HEK293 (cell line): ENCODE measurements at regions of chr6 and their contacts with region 1.

Region 1: DNA sequence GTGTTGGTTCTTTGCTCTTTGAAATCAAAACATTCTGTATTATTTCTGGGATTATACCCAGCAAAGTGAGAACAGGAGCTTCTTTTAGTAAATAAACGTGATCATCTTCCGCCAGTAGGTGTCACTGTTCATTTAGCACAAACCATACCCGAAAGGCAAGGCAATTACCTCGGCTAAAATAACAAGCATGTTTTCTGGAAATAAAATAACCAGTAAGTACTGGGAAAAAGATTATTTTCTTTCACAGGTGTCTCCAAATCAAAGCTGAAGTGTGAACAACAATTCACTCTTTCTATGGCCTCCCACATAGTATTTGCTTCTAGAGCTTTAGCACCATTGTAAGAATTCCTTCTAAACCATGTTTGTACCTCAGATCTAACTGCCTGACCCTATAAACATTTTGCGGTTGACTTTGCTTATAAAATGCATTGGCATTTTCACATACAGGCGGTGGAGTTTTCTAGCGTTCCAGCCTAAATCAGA is 144.6 kb upstream of the AGPAT4 start:
- H3K4me3 ChIP-seq: no peak overlapping the region
- H3K27ac ChIP-seq: no peak overlapping the region
- H3K4me1 ChIP-seq: no peaks in the 10 kb centered on the region
- CTCF ChIP-seq: 0 out of 2 replicates have a peak, but pooled peaks have one; percentile 23

Region 2: GRCh38 chr6:161279677-161280415 is 138.7 kb before region 1 on chr6:
- CTCF ChIA-PET with region 1: no interaction called
- POLR2A ChIA-PET with region 1: no interaction called
- H3K4me3 ChIP-seq: no peak overlapping the region
- H3K27ac ChIP-seq: no peak overlapping the region
- H3K4me1 ChIP-seq: no peaks in the 10 kb centered on the region
- CTCF ChIP-seq: no peak

Region 3: GRCh38 chr6:161292145-161292544 is 126.4 kb before region 1 on chr6:
- CTCF ChIA-PET with region 1: no interaction called
- POLR2A ChIA-PET with region 1: no interaction called
- H3K4me3 ChIP-seq: no peak overlapping the region
- H3K27ac ChIP-seq: no peak overlapping the region
- H3K4me1 ChIP-seq: no peaks in the 10 kb centered on the region
- CTCF ChIP-seq: no peak

Region 4: GRCh38 chr6:161327360-161327953 is 91.0 kb before region 1 on chr6:
- CTCF ChIA-PET with region 1: no interaction called
- POLR2A ChIA-PET with region 1: no interaction called
- H3K4me3 ChIP-seq: no peak overlapping the region
- H3K27ac ChIP-seq: no peak overlapping the region
- H3K4me1 ChIP-seq: no peaks in the 10 kb centered on the region
- CTCF ChIP-seq: no peak

Region 5: DNA sequence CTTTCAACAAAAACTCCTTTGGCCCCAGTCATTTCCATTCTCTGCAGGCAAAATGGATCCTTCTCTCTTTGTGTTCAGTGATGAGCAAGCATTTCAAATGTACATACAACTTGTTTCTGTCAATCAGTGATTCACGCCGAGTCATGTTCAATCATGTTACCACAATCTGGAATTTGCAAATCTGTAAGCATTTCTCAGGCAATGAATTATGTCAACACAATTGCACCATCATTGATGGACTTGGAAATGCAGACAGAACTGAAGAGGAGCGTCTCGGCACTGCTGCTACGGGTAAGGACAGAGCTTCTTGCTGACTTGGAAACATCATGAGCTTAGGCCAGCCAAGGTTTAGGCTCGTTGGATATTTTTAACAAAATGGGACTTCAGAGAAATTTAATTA is 11.9 kb before region 1 on chr6:
- CTCF ChIA-PET with region 1: interaction called, 37 read pairs
- POLR2A ChIA-PET with region 1: no interaction called
- H3K4me3 ChIP-seq: no peak overlapping the region
- H3K27ac ChIP-seq: no peak overlapping the region
- H3K4me1 ChIP-seq: no peaks in the 10 kb centered on the region
- CTCF ChIP-seq: no peak

Region 6: GRCh38 chr6:161439093-161439492 is 20.6 kb after region 1 on chr6:
- CTCF ChIA-PET with region 1: interaction called, 31 read pairs
- POLR2A ChIA-PET with region 1: no interaction called
- H3K4me3 ChIP-seq: no peak overlapping the region
- H3K27ac ChIP-seq: no peak overlapping the region
- H3K4me1 ChIP-seq: no peaks in the 10 kb centered on the region
- CTCF ChIP-seq: no peak

Region 7: GRCh38 chr6:161498359-161498758 is 79.9 kb after region 1 on chr6:
- CTCF ChIA-PET with region 1: interaction called, 78 read pairs
- POLR2A ChIA-PET with region 1: no interaction called
- H3K4me3 ChIP-seq: no peak overlapping the region
- H3K27ac ChIP-seq: no peak overlapping the region
- H3K4me1 ChIP-seq: no peaks in the 10 kb centered on the region
- CTCF ChIP-seq: peak; percentile 69

Region 8: GRCh38 chr6:161542346-161542980 is 124.0 kb after region 1 on chr6:
- CTCF ChIA-PET with region 1: interaction called, 10 read pairs
- POLR2A ChIA-PET with region 1: no interaction called
- H3K4me3 ChIP-seq: no peak overlapping the region
- H3K27ac ChIP-seq: no peak overlapping the region
- H3K4me1 ChIP-seq: no peaks in the 10 kb centered on the region
- CTCF ChIP-seq: no peak

Region 9: DNA sequence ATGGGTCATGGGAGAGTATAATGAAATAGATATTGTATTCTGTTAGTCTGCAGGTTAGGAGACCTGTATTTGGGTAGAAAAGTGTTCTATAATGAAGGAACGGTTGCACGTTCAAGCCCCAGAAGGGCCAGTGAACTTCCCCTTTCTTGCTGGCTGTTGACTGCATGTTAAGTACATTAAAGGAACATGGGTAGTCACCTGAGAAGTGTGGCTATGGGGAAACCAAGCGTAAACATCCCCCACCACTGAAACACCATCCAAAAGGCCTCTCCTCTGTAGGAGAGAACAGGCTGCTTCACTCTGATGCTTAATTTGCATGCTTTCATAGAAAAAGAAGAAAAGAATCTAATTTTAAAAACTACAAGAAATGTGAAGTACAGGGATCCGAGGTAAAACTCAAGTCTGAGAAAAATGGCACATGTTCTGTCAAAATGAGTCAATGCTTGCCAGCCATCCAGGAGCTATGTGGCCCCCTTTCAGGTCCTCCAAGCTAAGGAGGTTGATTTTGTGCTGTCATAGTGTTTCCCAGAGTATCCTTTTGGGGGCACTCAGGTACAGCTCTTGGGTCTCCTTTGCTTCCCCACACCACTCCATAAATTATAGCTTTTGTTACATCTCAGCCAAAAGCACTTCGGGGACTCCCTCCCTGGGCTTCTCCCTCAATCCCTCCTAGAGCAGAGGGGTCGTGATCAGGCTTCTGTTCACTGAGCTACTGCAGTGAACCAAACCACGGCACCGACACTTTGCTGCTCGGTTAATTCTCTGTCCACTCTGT is 139.0 kb after region 1 on chr6:
- CTCF ChIA-PET with region 1: interaction called, 10 read pairs
- POLR2A ChIA-PET with region 1: no interaction called
- H3K4me3 ChIP-seq: no peak overlapping the region
- H3K27ac ChIP-seq: no peak overlapping the region
- H3K4me1 ChIP-seq: no peaks in the 10 kb centered on the region
- CTCF ChIP-seq: no peak

Region 10: GRCh38 chr6:161985876-161986423 is 567.4 kb after region 1 on chr6:
- CTCF ChIA-PET with region 1: interaction called, 11 read pairs
- POLR2A ChIA-PET with region 1: no interaction called
- H3K4me3 ChIP-seq: no peak overlapping the region
- H3K27ac ChIP-seq: no peak overlapping the region
- H3K4me1 ChIP-seq: no peaks in the 10 kb centered on the region
- CTCF ChIP-seq: no peak

Region 11: DNA sequence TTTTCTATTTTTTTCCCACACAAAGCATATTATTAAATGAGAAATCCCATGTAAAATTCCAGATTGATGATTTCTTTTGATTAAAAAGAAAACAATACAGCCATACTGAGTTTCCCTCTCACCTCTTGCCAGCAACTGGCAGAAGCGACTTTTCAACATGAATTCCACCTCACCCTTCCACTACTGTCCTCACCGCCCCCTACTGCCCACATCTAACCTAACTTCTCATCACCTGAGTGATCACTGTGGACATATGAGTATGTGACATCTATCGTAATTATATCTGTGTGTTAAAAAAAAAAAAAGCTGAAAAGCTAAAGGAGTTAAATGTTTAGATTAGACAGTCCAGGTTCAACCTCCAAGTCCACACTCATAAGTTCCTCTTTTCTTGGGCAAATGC is 780.4 kb after region 1 on chr6:
- CTCF ChIA-PET with region 1: no interaction called
- POLR2A ChIA-PET with region 1: no interaction called
- H3K4me3 ChIP-seq: no peak overlapping the region
- H3K27ac ChIP-seq: no peak overlapping the region
- H3K4me1 ChIP-seq: no peaks in the 10 kb centered on the region
- CTCF ChIP-seq: no peak